ENCODE measurements at regions of chr4 and their contacts with region 1.

Region 1: DNA sequence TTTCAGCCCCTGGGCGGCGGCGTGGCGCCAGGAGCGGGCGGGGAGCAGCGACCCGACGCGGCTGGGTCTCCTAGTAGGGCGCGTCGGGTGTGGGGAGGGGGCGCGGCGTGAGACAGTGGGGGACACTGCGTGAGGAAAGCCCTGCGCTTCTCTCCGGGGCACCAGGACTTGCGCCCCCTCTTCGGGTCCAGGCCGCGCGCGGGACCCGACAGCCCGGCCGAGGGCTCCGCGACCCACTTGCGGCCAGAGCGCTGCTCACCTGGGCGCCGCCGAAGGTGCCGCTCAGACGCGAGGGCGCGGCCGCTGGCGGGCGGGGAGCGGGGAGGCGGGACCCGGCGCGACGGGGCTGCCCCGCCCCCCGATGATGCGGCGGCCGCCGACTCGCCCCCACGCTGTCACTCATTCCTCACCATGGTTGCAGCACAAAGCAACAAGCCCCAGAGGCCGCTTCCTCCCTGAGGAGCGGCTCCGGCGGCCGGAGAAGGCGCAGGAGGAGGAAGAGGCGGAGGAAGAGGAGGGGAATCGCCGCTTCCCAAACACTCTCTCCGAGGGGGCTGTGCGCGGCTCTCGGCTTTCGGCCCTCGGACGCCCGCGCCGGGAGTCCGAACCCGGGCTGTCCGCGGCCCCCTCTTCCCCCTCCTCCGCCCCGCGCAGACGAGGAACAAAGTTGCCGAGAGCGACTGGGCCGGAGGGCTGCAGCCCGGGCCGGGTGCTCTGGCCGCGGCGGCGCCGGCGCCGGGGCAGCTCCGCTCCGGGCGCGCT is at the start of gene RAPGEF2:
- DNase-seq: peak; percentile 95
- ATAC-seq: peak; percentile 95 to 96 (median 96)
- H3K4me3 ChIP-seq: peak within 1 kb of the TSS; percentile 85 to 99 (median 97)
- H3K27ac ChIP-seq: peak within 1 kb of the TSS; percentile 88 to 98 (median 96)
- H3K4me1 ChIP-seq: peaks cover 0 to 38% (median 25%) of the 10 kb centered on the region in 12 donors
- H3K27me3 ChIP-seq: no peaks in the 10 kb centered on the region
- CTCF ChIP-seq: peak in 1 of 12 donors; percentile 9
- POLR2A ChIP-seq: peak; percentile 93 to 99
- total RNA-seq, gene RAPGEF2: 35.3 to 75.9 (median 56.9) TPM

Region 2: DNA sequence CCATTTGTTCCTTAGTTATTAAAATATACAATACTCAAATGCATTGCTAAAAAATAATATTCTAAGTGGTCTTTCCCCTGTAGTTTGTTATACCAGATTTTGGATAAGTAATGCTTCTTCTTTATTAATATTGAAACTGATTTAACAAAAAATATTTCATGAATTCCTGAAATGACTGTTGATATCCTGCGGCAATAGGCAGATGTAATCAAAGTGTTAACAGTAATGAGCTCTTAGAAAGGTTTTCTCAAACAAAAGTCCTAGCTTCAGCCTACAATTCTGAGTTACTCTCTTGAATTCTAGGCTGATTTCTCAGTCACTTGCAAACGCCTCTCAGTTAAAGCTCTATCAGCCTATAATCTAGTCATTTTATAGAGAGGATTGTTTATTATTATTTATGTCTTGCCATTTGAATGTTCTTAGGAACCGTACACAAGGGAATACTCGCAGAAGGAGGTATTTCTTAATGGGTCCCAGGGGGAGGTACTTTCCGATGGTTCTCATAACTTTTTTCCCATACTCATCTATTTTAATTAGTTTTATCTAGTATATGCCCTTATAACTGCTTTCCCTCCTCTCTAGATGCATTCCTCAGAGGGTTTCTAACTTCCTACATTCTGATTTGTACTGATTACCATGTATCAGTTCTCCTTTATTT is 237.2 kb before region 1 on chr4:
- intact Hi-C with region 1: loop called in 4 of 10 experiments (anchors 5 to 10 kb)
- DNase-seq: no peak
- ATAC-seq: no peak
- H3K4me3 ChIP-seq: no peak overlapping the region
- H3K27ac ChIP-seq: peak overlapping the region in 1 of 12 donors; percentile 2
- H3K4me1 ChIP-seq: peaks cover 0 to 18% (median 5%) of the 10 kb centered on the region in 12 donors
- H3K27me3 ChIP-seq: no peaks in the 10 kb centered on the region
- CTCF ChIP-seq: no peak
- POLR2A ChIP-seq: no peak

Region 3: DNA sequence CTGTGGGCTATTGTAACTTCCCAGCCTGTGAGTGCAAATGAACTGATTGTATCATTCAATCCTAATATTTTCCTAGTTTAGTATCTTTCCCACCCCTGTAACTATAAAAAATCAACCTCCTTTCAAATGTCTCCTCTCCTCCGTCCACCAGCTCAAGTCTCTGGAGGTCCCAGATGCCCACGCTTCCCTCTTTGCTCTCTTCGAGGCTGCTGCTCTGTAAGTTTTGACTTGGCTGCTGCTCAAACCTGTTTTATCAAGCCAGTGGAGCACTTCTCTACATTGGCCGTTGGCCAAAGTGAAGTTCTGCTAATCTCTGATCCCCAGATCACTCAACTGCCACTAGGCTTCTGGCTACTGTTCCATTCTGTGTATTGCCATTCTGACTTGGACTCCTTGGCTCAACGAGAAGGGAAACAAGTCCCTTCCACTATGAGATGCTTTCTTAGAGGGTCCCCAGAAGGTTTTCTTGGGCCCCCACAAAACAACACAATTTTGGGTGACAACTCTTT is 60.7 kb before region 1 on chr4:
- intact Hi-C with region 1: loop called in 1 of 10 experiments (anchors 5 kb)
- DNase-seq: peak in 4 of 5 donors; percentile 36 to 66 (median 41)
- ATAC-seq: peak; percentile 60 to 81 (median 68)
- H3K4me3 ChIP-seq: no peak overlapping the region
- H3K27ac ChIP-seq: no peak overlapping the region
- H3K4me1 ChIP-seq: peaks cover 0 to 6% (median 1%) of the 10 kb centered on the region in 12 donors
- H3K27me3 ChIP-seq: no peaks in the 10 kb centered on the region
- CTCF ChIP-seq: no peak
- POLR2A ChIP-seq: no peak

Region 4: GRCh38 chr4:159169404-159170302 is 66.8 kb after region 1 on chr4:
- intact Hi-C with region 1: loop called in 7 of 10 experiments (anchors 1 to 10 kb)
- DNase-seq: no peak
- ATAC-seq: no peak
- H3K4me3 ChIP-seq: no peak overlapping the region
- H3K27ac ChIP-seq: no peak overlapping the region
- H3K4me1 ChIP-seq: peaks cover 0 to 82% (median 53%) of the 10 kb centered on the region in 12 donors
- H3K27me3 ChIP-seq: no peaks in the 10 kb centered on the region
- CTCF ChIP-seq: no peak
- POLR2A ChIP-seq: no peak

Region 5: DNA sequence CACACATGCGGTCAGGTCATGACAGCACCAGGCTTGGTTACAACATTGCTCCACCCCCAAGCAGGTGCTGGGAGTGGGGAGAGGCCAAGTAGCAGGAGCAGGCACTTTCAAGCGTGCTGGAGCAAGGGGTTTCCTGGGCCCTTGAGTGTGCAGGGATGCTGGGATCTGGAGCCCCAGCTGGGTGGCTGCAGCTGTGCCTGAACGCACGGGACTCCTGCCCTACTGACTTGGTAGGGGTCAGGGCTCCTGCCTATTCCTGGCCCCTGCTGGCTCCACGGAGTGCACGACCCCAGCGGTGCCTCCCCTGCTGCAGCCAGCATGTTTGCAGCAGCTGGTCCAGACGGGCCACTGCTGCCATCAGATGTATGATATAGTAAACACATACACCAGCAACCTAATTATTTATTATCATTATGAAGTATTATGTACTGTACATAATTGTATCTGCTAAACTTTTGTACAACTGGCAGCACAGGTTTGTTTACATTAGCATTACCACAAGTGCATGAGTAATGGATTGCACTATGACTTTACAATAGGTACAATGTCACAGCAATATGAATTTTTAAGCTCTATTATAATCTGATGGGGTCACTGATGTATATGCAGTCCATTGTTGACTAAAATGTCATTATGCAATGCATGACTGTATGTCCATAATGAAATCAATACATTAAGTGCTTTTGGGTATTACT is 620.7 kb after region 1 on chr4:
- intact Hi-C with region 1: no loop called
- DNase-seq: no peak
- ATAC-seq: no peak
- H3K4me3 ChIP-seq: no peak overlapping the region
- H3K27ac ChIP-seq: no peak overlapping the region
- H3K4me1 ChIP-seq: no peaks in the 10 kb centered on the region
- H3K27me3 ChIP-seq: no peaks in the 10 kb centered on the region
- CTCF ChIP-seq: no peak
- POLR2A ChIP-seq: no peak